ENCODE measurements at regions of chr5 and their contacts with region 1.

Region 1: DNA sequence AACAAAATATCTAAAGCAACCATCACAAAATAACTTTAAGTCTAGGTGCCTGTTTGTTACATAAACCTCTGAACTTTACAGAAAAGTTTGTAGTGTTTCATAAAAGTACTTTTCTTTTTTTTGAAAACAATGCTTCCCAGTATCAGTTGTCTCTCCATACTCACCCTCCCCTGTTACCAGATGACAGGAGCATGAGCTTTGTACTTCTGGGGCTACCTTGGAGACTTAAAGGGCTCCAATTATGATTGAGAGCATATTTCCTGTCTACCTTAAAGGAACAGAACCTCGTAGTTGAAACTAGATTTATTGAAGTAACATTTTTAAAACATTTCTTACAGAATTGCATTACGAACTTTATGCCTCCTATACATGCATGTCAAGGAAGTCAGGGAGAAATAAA is 55.4 kb upstream of the PPP1R2B start:
- DNase-seq: no peak
- H3K4me3 Mint-ChIP-seq: no peak overlapping the region
- H3K27ac Mint-ChIP-seq: no peak overlapping the region
- H3K4me1 Mint-ChIP-seq: peaks cover 10% of the 10 kb centered on the region
- H3K27me3 Mint-ChIP-seq: no peaks in the 10 kb centered on the region
- CTCF ChIP-seq: no peak

Region 2: GRCh38 chr5:156693113-156693512 is 101.6 kb before region 1 on chr5:
- CTCF ChIA-PET with region 1: no interaction called
- intact Hi-C with region 1: loop called (anchors 5 kb)
- DNase-seq: no peak
- H3K4me3 Mint-ChIP-seq: no peak overlapping the region
- H3K27ac Mint-ChIP-seq: no peak overlapping the region
- H3K4me1 Mint-ChIP-seq: peaks cover 16% of the 10 kb centered on the region
- H3K27me3 Mint-ChIP-seq: peaks cover 13% of the 10 kb centered on the region
- CTCF ChIP-seq: no peak